ENCODE measurements at regions of chr5 and their contacts with region 1.

Region 1: DNA sequence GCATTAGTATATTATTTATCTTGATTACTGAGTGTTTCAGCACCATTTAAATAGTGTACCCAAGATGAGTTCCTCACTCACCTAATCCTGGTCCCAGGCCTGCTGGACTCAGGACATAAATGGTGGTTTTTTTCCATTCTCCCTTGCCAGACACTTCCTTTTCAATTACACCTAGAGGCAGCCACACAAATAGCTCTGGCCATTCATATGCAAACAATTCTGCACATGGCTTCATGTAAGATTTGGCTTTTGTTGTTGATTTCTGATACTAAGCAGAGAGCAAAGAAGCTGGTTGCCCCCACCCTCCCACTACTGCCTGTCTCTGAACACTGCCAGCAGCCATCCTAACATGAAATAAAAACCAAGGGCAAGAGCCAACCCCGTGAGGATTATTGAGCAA is 180.4 kb downstream of the SEMA5A start:
- DNase-seq: no peak
- H3K4me3 ChIP-seq: no peak overlapping the region
- H3K27ac ChIP-seq: no peak overlapping the region
- H3K4me1 ChIP-seq: no peaks in the 10 kb centered on the region
- H3K27me3 ChIP-seq: no peaks in the 10 kb centered on the region
- CTCF ChIP-seq: no peak
- POLR2A ChIP-seq: no peak

Region 2: GRCh38 chr5:8098081-8098480 is 1267.4 kb before region 1 on chr5:
- intact Hi-C with region 1: loop called (anchors 5 kb)
- DNase-seq: no peak
- H3K4me3 ChIP-seq: no peak overlapping the region
- H3K27ac ChIP-seq: no peak overlapping the region
- H3K4me1 ChIP-seq: no peaks in the 10 kb centered on the region
- H3K27me3 ChIP-seq: no peaks in the 10 kb centered on the region
- CTCF ChIP-seq: no peak
- POLR2A ChIP-seq: no peak

Region 3: DNA sequence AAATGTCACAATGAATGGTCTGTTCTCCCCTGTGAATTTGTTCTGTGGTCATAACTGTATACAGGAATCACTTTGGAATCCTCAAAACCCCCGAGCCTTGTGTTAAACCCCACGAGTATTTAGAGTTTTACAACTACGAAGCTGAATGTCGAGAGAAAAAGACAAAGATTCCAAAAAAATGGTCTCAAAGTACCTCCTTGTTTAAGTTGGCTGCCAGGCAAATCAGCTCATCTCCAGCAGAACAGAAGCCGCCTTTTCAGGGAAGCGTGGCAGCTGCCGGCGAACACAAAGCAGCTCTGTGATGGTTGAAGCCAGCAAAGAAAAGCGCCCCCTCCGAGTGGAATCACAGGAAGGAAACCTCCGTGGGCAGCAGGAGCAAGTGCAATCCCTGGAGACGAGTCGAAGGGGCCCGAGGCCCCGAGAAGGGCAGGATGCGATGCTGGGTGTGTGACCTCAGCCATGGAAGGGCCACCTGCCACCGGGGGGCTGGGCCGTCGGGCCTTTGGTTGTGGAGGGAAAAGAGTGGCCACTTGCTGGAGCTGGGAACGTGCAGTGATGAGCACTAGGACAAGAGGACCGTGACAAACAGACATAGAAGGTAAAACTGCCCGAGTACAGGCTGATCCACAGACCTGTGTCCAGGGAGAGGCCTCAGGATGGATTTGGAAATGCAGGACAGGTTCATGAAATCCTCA is 526.0 kb before region 1 on chr5:
- intact Hi-C with region 1: no loop called
- DNase-seq: no peak
- H3K4me3 ChIP-seq: no peak overlapping the region
- H3K27ac ChIP-seq: no peak overlapping the region
- H3K4me1 ChIP-seq: no peaks in the 10 kb centered on the region
- H3K27me3 ChIP-seq: no peaks in the 10 kb centered on the region
- CTCF ChIP-seq: no peak
- POLR2A ChIP-seq: no peak

Region 4: DNA sequence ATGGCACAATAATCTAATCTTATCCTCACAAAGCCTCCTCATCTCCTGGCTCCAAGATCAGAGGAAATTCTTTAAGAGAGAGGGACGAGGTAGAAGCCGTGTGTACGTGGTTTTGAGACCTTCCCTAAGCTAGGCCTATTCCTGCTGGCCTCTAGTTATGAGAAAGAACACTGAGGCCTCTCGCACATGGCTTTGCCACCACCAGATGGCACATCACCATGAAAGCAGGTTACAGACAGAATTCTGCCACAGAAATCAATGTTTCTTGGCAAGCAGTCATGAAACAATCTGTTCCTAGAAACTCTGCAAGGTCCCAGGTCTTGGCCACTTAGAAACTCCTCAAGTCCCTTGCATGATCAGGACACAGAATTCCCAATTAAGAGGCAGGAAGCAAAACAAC is 532.8 kb after region 1 on chr5:
- intact Hi-C with region 1: no loop called
- DNase-seq: no peak
- H3K4me3 ChIP-seq: no peak overlapping the region
- H3K27ac ChIP-seq: no peak overlapping the region
- H3K4me1 ChIP-seq: no peaks in the 10 kb centered on the region
- H3K27me3 ChIP-seq: no peaks in the 10 kb centered on the region
- CTCF ChIP-seq: no peak
- POLR2A ChIP-seq: no peak